ENCODE measurements at regions of chr3 and their contacts with region 1.

Region 1: DNA sequence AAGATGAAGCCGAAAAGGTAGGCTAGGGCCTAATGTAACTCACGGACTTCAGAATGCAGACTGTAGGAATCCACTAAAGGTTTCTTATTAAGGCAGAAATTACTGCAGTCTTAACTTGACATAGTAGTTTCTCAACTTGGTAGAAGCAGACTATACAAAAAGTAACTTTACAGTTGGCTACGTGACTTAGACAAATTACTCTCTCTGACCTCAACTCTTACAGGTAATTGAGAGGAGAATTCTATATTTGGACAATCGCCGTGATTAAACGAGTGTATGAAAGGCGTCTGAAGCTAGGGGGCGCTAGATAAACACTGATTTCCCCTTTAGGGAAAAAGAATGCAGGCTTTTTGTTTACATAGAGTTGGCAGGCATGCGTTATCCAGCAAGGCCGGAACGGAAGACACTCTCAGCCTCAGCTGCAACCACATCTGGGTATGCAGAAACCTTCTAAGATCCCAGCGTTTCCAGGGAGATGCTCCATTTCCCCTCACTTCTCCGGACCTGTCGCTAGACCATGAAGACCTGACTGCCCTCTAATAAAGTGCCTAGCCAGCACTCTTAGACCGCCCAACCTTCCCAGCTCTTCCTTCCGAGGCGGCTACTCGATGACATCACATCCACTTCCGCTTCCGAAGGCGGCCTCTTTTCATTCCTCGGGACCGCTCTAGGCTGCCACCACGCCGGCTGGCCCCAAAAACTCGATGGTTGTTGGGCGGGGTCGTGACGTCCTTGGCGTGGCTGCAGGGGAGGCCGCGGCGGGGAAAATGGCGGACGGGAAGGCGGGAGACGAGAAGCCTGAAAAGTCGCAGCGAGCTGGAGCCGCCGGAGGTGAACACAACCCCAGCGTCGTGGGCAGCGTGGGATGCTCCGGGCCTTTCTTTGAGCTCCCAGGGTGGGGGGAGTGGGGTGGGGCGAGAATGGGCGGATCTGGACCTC is at the start of gene PCNP:
- DNase-seq: peak; percentile 99
- H3K4me3 Mint-ChIP-seq: peak within 1 kb of the TSS; percentile 94
- H3K27ac Mint-ChIP-seq: peak within 1 kb of the TSS; percentile 99
- H3K4me1 Mint-ChIP-seq: peaks cover 68% of the 10 kb centered on the region
- H3K27me3 Mint-ChIP-seq: no peaks in the 10 kb centered on the region
- total RNA-seq, gene PCNP: 182 and 190 TPM in 2 replicates

Region 2: GRCh38 chr3:100334488-100335351 is 1239.0 kb before region 1 on chr3 and contains the start of gene NIT2:
- intact Hi-C with region 1: loop called (anchors 1 kb)
- DNase-seq: peak; percentile 73
- H3K4me3 Mint-ChIP-seq: peak within 1 kb of the TSS; percentile 94
- H3K27ac Mint-ChIP-seq: peak within 1 kb of the TSS; percentile 98
- H3K4me1 Mint-ChIP-seq: peaks cover 14% of the 10 kb centered on the region
- H3K27me3 Mint-ChIP-seq: no peaks in the 10 kb centered on the region
- total RNA-seq, gene NIT2: 65.9 and 69.5 TPM in 2 replicates

Region 3: GRCh38 chr3:101391413-101391950 is 182.2 kb before region 1 on chr3:
- intact Hi-C with region 1: loop called (anchors 1 kb)
- DNase-seq: no peak
- H3K4me3 Mint-ChIP-seq: no peak overlapping the region
- H3K27ac Mint-ChIP-seq: no peak overlapping the region
- H3K4me1 Mint-ChIP-seq: peaks cover 27% of the 10 kb centered on the region
- H3K27me3 Mint-ChIP-seq: no peaks in the 10 kb centered on the region

Region 4: DNA sequence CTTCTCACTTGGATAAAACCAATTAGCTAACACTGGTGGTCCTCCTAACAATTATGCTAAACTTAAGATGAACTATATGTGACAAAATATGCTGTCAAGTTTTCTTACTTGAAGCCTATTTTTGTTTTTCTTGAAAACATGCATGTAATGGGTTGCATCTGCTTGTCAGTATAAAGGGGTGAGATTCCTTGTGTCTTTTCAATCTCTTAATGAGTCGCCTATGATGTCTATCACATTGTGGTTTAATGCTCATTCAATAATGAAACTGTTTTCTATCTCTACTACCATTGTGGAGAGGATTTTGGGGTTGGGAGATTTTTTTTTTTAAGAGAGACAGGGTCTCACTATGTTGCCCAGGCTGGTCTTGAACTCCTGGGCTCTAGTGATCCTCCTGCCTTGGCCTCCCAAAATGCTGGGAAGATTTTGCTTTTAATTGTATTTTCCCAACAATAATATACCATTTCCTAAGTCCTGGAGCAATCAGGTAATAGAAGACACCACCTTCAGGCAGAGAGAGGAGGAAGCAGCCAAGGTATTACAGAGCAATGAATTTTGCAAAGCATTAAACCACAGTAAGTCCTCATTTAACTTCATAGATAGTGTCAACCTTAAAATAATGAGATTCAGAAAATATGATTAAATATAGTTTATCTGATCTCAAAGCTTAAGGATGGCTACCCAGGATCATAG is 29.4 kb before region 1 on chr3:
- intact Hi-C with region 1: loop called (anchors 1 kb)
- DNase-seq: no peak
- H3K4me3 Mint-ChIP-seq: no peak overlapping the region
- H3K27ac Mint-ChIP-seq: peak overlapping the region; percentile 71
- H3K4me1 Mint-ChIP-seq: peaks cover 29% of the 10 kb centered on the region
- H3K27me3 Mint-ChIP-seq: no peaks in the 10 kb centered on the region

Region 5: DNA sequence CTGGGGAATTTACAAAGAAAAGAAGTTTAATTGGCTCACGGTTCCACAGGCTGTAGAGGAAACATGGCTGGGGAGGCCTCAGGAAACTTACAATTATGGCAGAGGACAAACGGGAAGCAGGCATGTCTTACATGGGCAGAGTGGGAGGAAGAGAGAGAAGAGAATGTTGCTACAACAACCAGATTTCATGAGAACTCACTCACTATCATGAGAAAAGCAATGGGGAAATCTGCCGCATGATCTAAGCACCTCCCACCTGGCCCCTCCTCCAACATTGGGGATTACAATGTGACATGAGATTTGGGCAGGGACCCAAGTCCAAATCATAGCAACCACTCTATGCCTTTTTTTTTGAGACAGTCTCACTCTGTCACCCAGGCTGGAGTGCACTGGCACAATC is 29.0 kb after region 1 on chr3:
- intact Hi-C with region 1: no loop called
- DNase-seq: no peak
- H3K4me3 Mint-ChIP-seq: no peak overlapping the region
- H3K27ac Mint-ChIP-seq: no peak overlapping the region
- H3K4me1 Mint-ChIP-seq: no peaks in the 10 kb centered on the region
- H3K27me3 Mint-ChIP-seq: no peaks in the 10 kb centered on the region

Region 6: GRCh38 chr3:101676765-101677435 is 103.2 kb after region 1 on chr3 and contains the start of gene ZBTB11:
- intact Hi-C with region 1: loop called (anchors 1 kb)
- DNase-seq: peak; percentile 99
- H3K4me3 Mint-ChIP-seq: peak within 1 kb of the TSS; percentile 96
- H3K27ac Mint-ChIP-seq: peak within 1 kb of the TSS; percentile 97
- H3K4me1 Mint-ChIP-seq: peaks cover 56% of the 10 kb centered on the region
- H3K27me3 Mint-ChIP-seq: no peaks in the 10 kb centered on the region
- total RNA-seq, gene ZBTB11: 29.0 and 31.9 TPM in 2 replicates

Region 7: DNA sequence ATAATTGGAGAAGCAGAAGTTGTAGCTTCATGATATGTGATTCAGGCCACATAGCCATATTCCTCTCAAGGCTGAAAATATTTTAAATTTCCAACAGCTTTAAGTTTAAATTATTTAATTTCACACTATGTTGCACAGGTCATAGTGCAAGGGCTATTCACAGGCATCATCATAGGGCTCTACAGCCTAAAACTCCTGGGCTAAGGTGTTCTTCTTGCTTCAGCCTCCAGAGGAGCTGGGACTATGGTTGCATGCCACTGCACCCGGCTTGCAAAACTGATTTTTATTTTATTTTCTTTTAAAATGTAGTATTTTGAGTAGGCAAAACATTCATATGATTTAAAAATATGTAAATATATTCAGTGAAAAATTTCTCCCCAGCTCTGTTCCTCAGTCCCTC is 144.7 kb after region 1 on chr3:
- intact Hi-C with region 1: no loop called
- DNase-seq: no peak
- H3K4me3 Mint-ChIP-seq: no peak overlapping the region
- H3K27ac Mint-ChIP-seq: no peak overlapping the region
- H3K4me1 Mint-ChIP-seq: peaks cover 23% of the 10 kb centered on the region
- H3K27me3 Mint-ChIP-seq: no peaks in the 10 kb centered on the region

Region 8: DNA sequence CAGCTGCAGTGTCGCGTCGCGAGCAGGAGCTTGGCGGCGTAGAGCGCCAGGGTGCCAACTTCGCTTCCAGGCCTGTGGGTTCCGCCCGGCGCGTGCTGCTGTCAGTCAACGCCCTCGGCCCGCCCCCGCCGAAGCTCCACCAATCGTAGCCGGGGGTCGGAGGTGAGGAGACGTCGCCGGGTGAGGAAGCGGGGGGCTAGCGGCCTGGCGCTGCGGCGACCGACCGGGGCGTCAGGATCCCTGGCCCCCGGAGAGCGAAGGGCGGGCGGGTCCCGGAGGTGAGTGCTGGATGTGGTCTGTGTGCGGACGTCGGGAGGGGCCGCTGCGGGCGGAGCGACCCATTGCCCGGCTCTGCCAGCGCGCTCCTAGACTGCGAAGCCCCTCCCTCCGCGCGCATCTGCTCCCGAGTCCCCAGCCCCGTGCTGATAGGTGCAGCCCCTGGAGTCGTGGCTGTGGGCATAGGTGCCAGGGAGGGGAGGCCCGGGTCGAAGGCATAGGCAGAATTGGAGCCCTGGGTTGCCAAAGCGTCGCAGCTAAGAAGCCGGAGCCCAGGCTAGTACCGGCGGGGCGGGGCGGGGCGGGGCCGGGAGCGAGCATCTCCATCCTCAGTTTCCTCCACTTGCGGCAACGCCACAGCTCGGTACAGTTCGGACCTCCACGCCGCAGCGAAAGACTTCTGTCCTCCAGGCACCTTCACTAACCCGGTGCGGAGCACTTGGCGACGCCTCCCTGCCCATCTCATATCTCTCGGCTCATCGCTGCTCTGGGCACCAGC is 205.5 kb after region 1 on chr3 and contains the start of gene NXPE3:
- intact Hi-C with region 1: loop called (anchors 5 kb)
- DNase-seq: peak; percentile 92
- H3K4me3 Mint-ChIP-seq: peak within 1 kb of the TSS; percentile 96
- H3K27ac Mint-ChIP-seq: peak within 1 kb of the TSS; percentile 85
- H3K4me1 Mint-ChIP-seq: peaks cover 38% of the 10 kb centered on the region
- H3K27me3 Mint-ChIP-seq: no peaks in the 10 kb centered on the region
- total RNA-seq, gene NXPE3: 17.6 and 17.8 TPM in 2 replicates

Measured in activated T-helper 1 cell treated with anti-CD3 and anti-CD28 coated beads, Interleukin-12 subunit alpha, Interleukin-12 subunit beta, Interleukin-2, Interleukin-4 antibody, amounts not matched to agents 30 ng/mL and 10 ng/mL and 1 ng/mL, durations not matched to agents 14 hours and 24 hours and 36 hours (primary cell).